PC-3 (cell line): ENCODE measurements at regions of chr5 and their contacts with region 1.

Region 1: GRCh38 chr5:172770675-172771438 is at the start of gene DUSP1:
- DNase-seq: peak; percentile 97
- ATAC-seq: peak; percentile 54
- H3K4me3 ChIP-seq: peak within 1 kb of the TSS; percentile 90
- H3K27ac ChIP-seq: peak within 1 kb of the TSS; percentile 90
- H3K4me1 ChIP-seq: peaks cover 59% of the 10 kb centered on the region
- H3K27me3 ChIP-seq: no peaks in the 10 kb centered on the region
- CTCF ChIP-seq: peak; percentile 38; the same call in 1 of the 2 replicates
- total RNA-seq, gene DUSP1: 522 and 586 TPM in 2 replicates

Region 2: DNA sequence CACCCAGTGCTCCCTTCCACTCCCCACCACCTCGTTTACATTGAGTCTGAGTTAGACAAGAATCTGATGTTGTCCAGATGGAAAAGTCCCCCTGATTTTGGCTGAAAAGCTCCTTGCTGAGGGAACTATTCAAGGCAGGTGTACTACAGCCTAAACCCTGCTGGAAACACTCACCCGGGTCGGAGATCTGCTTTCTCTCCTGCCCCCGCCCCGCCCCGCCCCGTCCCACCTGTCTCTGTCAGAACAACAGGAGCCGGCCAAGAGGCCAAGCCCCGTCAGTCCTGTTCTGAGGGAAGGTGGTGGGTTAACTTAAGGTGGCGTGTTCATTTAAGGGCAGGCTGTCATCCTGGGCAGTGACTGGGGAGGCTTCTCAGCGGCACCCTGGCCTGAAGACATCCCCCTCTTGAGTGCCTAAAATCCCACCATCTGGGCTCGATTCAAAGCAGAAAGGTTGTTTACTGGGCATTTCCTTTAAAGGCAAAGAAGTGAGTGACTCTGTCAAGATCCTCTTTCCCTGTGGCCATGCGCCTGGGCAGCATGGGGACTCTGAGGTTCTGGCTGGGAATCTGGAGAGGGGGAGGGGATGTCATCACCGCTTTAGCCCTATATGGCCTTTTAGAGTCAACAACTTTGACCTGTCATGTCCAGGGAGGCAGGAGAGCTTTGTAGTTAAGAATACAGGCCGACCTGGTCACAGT is 200.8 kb before region 1 on chr5:
- CTCF ChIA-PET with region 1: no interaction called
- POLR2A ChIA-PET with region 1: no interaction called
- intact Hi-C with region 1: no loop called
- DNase-seq: no peak
- ATAC-seq: no peak
- H3K4me3 ChIP-seq: no peak overlapping the region
- H3K27ac ChIP-seq: no peak overlapping the region
- H3K4me1 ChIP-seq: no peaks in the 10 kb centered on the region
- H3K27me3 ChIP-seq: peaks cover 46% of the 10 kb centered on the region
- CTCF ChIP-seq: no peak

Region 3: GRCh38 chr5:172714491-172715421 is 56.1 kb before region 1 on chr5:
- CTCF ChIA-PET with region 1: interaction called, 7 read pairs
- POLR2A ChIA-PET with region 1: no interaction called
- intact Hi-C with region 1: loop called (anchors 1 kb)
- DNase-seq: peak; percentile 78
- ATAC-seq: peak; percentile 70
- H3K4me3 ChIP-seq: no peak overlapping the region
- H3K27ac ChIP-seq: peak overlapping the region; percentile 67
- H3K4me1 ChIP-seq: peaks cover 13% of the 10 kb centered on the region
- H3K27me3 ChIP-seq: no peaks in the 10 kb centered on the region
- CTCF ChIP-seq: peak; percentile 84

Region 4: DNA sequence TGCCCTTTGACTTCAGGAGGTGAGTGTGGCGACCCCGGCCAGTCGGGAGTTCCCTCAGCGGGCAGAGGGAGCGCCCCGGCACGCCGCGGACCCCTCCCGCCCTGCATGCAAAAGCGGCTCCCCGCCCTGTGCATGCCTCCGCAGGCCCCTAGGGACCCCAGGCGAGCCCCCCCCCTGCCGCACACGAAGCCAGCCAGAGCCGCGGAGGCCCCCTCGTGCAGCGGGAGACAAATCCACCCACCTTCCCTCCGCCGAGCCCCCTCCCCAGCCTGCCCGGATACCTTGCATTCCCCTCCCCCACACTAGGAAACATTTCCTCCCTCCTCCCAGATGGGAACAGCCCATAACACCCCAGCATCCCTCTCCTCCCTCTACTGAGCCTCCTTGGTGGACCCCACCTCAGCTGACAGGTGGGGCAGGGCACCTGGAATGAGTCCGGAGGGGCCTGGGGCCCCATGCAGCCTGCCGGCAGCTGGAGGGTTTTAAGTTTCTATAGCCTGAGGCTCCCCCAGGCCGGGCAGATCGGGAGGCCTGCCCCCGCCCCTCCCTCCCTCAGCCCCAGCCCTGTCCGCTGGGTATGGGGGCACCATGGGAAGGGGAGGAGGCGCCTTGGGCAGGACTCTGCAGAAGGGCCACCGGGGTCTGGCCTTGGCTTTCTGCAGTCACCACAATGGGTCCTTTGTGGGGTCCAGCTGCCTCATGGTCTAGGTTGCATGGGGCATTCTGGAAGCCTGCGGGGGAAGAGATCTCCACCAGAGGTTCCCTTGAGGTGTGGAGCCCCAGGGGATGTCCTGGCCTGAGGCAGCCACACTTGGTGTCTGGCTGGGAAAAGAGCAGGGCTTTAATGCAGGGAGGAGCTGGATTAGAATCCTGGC is 63.8 kb after region 1 on chr5:
- CTCF ChIA-PET with region 1: no interaction called
- POLR2A ChIA-PET with region 1: interaction called, 3 read pairs
- intact Hi-C with region 1: loop called (anchors 1 kb)
- DNase-seq: no peak
- ATAC-seq: peak; percentile 16
- H3K4me3 ChIP-seq: peak overlapping the region; percentile 92
- H3K27ac ChIP-seq: peak overlapping the region; percentile 61
- H3K4me1 ChIP-seq: peaks cover 23% of the 10 kb centered on the region
- H3K27me3 ChIP-seq: no peaks in the 10 kb centered on the region
- CTCF ChIP-seq: no peak

Region 5: DNA sequence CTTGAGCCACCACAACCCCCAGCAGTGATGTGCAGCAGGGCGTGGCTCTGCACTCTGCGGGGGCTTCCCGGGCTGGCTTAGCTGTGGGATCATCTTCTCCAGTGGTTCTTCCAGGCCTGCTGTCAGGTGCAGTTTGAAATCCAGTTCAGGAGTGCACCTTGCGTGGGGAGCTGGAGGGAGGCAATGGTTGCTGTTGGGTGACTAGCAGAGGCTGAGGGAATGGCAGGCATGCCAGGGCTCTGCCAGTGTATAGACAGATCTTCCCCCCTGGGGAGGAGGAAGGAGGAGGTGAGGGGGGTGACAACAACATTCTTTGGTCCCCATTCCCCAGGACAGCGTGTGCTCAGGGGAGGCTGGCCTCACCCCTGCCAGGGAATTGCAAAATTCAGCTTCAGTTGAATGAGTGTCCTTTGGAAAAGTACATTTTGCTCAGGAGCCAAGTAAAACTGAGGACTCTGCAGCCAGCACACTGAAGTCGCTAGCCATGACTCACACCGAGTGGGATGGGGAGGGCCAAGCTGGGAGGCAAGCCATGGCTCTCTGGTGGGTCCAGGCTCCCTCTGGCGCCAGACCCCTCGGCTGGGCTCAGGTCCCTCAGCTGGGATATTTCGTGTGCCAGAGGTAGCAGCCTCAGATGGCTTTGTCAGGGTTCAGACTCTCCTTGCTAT is 98.2 kb after region 1 on chr5:
- CTCF ChIA-PET with region 1: interaction called, 6 read pairs
- POLR2A ChIA-PET with region 1: interaction called, 5 read pairs
- intact Hi-C with region 1: loop called (anchors 1 kb)
- DNase-seq: peak; percentile 88
- ATAC-seq: peak; percentile 70
- H3K4me3 ChIP-seq: peak overlapping the region; percentile 55
- H3K27ac ChIP-seq: peak overlapping the region; percentile 99
- H3K4me1 ChIP-seq: peaks cover 48% of the 10 kb centered on the region
- H3K27me3 ChIP-seq: no peaks in the 10 kb centered on the region
- CTCF ChIP-seq: peak; percentile 55

Region 6: GRCh38 chr5:172925336-172925948 is 154.6 kb after region 1 on chr5:
- CTCF ChIA-PET with region 1: interaction called, 3 read pairs
- POLR2A ChIA-PET with region 1: interaction called, 16 read pairs
- intact Hi-C with region 1: no loop called
- DNase-seq: no peak
- ATAC-seq: no peak
- H3K4me3 ChIP-seq: no peak overlapping the region
- H3K27ac ChIP-seq: no peak overlapping the region
- H3K4me1 ChIP-seq: peaks cover 7% of the 10 kb centered on the region
- H3K27me3 ChIP-seq: no peaks in the 10 kb centered on the region
- CTCF ChIP-seq: no peak

Region 7: DNA sequence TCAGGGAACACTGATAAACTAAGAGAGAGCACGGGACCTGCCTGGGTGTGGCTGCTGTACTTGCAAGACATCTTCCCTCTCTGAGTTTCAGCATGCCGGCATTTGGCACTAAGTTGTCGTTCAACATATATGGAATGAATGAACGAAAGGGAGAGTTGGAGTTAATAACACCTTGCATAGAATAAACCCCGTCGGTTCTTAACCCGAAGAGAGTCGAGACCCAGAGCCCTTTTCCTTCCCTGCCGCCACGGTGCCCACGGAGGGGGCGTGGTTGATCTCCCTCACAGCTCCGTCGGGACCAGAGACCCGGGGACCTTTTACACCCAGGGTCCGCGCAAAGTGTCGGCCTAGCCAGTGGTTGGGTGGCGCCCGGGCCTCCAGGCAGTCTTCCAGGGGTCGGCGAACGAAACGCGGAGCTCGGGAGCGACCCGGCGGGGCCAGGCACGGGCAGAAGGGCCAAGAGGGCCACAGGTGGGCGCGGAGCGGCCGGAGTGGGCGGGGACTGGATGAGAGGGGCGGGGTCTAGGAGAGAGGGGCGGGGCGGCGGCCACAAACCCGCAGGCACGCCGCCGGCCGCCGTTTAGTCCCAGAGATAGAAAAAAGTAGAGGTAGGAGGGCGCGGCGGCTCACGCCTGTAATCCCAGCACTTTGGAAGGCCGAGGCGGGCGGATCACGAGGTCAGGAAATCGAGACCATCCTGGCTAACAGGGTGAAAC is 187.6 kb after region 1 on chr5:
- CTCF ChIA-PET with region 1: interaction called, 4 read pairs
- POLR2A ChIA-PET with region 1: no interaction called
- intact Hi-C with region 1: loop called (anchors 2 kb)
- DNase-seq: peak; percentile 59
- ATAC-seq: peak; percentile 74
- H3K4me3 ChIP-seq: peak overlapping the region; percentile 92
- H3K27ac ChIP-seq: no peak overlapping the region
- H3K4me1 ChIP-seq: peaks cover 22% of the 10 kb centered on the region
- H3K27me3 ChIP-seq: no peaks in the 10 kb centered on the region
- CTCF ChIP-seq: no peak